A549 (cell line): ENCODE measurements at regions of chr21 and their contacts with region 1.

Region 1: DNA sequence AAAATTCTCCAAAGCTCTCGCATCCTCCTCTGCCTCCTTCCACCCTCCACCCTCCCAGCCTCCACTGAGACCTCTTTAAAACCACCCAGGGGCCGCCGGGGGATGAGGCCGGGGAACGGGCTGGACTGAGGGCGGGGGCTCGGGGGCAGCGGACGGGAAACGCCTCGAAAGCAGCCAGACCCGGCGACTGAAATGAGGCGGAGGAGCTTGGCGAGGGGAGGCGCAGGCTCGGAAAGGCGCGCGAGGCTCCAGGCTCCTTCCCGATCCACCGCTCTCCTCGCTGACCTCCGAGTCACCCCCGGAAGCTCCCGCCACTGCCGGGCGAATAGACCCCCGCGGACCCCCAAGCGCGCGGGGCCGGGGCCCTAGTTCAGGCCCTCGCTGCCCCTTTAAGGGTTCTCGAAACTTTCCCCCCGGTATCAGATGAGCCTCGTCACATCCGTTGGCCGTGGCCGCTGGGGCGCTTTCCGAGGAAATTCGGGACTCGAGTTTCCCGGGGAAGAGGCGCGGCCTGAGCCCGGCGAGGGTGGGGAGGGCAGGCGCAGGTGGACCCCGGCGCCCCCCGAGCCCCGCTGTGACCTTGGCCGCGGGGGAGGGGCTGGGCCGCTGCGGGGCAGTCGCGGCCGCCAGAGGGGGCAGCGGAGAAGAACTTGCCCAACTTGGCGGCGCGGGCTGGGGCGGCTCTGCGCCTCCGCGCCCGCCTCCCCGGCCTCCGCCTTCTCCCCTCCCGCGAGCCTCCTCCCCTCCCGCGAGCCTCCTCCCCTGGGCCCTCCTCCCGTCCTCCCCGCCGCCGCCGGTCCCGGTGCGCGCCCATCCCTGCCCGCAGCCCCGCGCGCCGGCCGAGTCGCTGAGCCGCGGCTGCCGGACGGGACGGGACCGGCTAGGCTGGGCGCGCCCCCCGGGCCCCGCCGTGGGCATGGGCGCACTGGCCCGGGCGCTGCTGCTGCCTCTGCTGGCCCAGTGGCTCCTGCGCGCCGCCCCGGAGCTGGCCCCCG is at the start of gene BACE2:
- DNase-seq: peak; percentile 31 to 72
- ATAC-seq: peak; percentile 87 to 89
- H3K4me3 ChIP-seq: peak within 1 kb of the TSS; percentile 69
- H3K27ac ChIP-seq: peak within 1 kb of the TSS; percentile 91 to 97
- H3K4me1 ChIP-seq: peaks cover 13% of the 10 kb centered on the region; the same call in 2 of the 3 replicates
- CTCF ChIP-seq: peak; percentile 33; the same call in 2 of the 3 replicates
- EP300 ChIP-seq: no peak
- POLR2A ChIP-seq: no peak; the same call in 1 of the 2 replicates
- RAD21 ChIP-seq: no peak
- polyA plus RNA-seq, gene BACE2: 23.7 and 26.0 TPM in 2 replicates

Region 2: GRCh38 chr21:40976198-40977109 is 191.2 kb before region 1 on chr21:
- CTCF ChIA-PET with region 1: no interaction called
- POLR2A ChIA-PET with region 1: no interaction called
- DNase-seq: no peak
- ATAC-seq: no peak
- H3K4me3 ChIP-seq: no peak overlapping the region
- H3K27ac ChIP-seq: no peak overlapping the region
- H3K4me1 ChIP-seq: no peaks in the 10 kb centered on the region
- CTCF ChIP-seq: no peak
- EP300 ChIP-seq: no peak
- POLR2A ChIP-seq: no peak
- RAD21 ChIP-seq: no peak

Region 3: DNA sequence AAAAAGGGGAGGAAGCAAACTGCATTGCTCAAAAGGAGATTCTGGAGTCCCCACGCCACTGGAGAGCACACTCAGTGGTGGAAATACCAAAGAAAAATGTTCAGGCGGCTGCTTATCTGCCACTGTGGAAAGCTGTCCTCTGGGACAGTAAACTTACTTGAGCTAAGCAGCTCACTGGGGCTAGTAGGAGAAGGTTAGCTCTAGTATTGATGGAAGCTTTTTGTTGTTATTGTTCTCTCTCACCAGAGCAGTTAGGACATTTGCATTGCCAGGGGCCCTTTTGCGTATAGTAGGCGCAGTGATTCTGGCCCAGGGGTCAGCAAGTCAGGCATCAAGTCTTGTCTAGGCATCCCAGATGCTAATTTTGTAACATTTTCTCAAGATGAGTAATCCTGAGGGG is 15.9 kb after region 1 on chr21:
- CTCF ChIA-PET with region 1: interaction called, 19 read pairs
- POLR2A ChIA-PET with region 1: no interaction called
- DNase-seq: no peak
- ATAC-seq: no peak
- H3K4me3 ChIP-seq: no peak overlapping the region
- H3K27ac ChIP-seq: no peak overlapping the region
- H3K4me1 ChIP-seq: no peaks in the 10 kb centered on the region
- CTCF ChIP-seq: no peak
- EP300 ChIP-seq: no peak
- POLR2A ChIP-seq: no peak
- RAD21 ChIP-seq: no peak